ENCODE measurements at regions of chr19 and their contacts with region 1.

Region 1: GRCh38 chr19:5577785-5578493 is 10.2 kb upstream of the TINCR start:
- DNase-seq: peak; percentile 83
- ATAC-seq: peak; percentile 89

Region 2: DNA sequence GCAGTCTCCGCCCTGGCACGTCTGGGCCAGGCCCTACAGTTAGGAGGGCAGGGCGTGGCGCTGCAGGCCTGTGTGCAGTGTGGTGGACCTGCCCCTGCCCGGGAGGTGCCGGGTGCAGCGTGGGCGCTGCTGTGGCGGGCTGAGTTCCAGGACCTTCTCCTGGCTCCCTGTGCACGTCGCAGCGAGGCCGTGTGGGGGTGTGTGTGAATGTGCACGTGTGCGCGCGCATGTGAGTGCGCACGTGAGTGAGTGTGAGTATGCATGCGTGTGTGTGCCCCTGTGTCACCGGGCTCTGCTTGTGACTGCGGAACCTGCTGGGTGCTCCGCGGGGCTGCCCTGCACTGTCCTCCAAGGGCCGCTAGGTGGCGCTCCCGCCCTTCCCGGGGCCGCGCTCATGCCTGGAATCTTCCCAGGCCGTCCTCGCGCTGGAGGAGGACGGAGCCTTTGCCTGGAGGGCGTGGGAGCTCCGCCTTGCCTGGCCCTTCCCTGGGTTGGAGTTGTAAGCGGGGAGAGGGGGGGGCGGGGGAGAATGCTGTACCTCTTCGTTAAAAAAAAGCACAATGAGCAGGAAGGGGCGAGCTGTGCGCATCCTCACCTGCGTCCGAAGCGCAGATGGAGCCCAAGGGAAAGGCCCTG is 529.7 kb before region 1 on chr19:
- intact Hi-C with region 1: loop called (anchors 5 kb)
- DNase-seq: peak; percentile 89
- ATAC-seq: peak; percentile 93

Region 3: DNA sequence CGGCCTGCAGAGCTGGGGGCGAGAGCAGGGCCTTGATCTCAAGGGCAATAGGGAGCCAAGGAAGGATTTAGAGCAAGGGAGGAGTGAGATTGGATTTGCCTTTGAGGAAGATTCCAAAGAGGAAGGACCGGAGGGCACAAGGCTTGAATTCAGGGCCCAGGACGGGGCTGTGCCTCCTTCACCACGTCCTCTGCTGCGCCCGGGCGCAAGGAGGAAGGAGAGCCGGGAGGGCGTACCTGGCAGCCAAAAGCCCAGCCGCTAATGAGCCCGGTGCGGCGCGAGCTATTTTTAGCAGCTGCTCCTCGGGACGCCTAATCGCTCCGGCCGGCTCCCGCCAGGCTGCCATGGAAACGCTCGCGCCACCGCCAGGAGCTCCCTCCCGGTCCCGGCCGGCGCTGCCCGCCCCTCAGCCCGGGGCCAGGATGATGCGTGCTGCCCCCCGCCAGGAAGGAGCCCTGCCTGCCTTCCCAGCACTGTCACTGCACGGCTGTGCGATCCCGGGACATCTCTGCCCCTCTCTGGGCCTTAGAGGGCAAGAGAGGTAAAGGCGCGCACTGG is 41.5 kb before region 1 on chr19:
- intact Hi-C with region 1: no loop called
- DNase-seq: peak; percentile 61
- ATAC-seq: peak; percentile 44

Region 4: DNA sequence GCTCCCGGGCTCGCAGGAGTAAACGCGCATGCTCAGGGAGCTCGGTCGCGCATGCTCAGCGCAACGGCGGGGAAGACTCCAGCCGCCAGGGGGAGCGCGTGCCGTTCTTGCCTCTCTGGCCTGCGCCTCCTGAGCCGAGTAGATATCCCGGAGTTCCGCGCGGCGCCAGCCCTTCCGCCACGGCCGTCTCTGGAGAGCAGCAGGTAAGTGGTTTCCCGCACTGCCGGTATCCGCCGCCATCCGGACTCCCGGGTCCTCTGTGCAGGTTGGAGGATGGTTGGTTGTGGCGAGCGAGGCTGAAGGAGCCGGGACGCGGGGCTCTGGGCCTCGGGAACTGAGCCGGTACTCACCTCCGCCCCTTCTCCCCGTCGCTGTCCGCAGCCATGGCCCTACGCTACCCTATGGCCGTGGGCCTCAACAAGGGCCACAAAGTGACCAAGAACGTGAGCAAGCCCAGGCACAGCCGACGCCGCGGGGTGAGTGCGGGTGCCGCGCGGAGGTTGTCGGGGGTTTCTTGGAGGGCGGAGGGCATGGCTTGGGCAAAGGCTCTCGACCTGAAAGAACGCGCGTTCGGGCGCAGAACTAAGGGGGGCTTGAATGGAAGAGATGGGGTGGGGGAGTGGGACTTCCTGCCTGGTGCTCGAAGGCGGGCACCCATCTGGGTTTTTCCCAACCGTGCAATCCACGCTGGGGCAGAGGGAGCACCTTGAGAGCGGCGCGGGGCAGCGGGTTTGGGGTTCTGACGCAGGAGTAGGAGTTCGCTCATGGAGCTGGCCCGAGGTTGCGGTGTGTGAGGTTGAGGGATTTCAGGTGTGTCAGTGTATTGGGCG is 112.4 kb after region 1 on chr19 and contains the start of gene RPL36:
- intact Hi-C with region 1: no loop called
- DNase-seq: peak; percentile 99
- ATAC-seq: peak; percentile 89
- total RNA-seq, gene RPL36: 601 TPM

Measured in sciatic nerve (tissue), 2 donors.